ENCODE measurements at regions of chr1 and their contacts with region 1.

Region 1: GRCh38 chr1:38990738-38991639 is at the start of gene AKIRIN1:
- DNase-seq: peak; percentile 99
- ATAC-seq: peak; percentile 99
- total RNA-seq, gene AKIRIN1: 65.7 TPM

Region 2: DNA sequence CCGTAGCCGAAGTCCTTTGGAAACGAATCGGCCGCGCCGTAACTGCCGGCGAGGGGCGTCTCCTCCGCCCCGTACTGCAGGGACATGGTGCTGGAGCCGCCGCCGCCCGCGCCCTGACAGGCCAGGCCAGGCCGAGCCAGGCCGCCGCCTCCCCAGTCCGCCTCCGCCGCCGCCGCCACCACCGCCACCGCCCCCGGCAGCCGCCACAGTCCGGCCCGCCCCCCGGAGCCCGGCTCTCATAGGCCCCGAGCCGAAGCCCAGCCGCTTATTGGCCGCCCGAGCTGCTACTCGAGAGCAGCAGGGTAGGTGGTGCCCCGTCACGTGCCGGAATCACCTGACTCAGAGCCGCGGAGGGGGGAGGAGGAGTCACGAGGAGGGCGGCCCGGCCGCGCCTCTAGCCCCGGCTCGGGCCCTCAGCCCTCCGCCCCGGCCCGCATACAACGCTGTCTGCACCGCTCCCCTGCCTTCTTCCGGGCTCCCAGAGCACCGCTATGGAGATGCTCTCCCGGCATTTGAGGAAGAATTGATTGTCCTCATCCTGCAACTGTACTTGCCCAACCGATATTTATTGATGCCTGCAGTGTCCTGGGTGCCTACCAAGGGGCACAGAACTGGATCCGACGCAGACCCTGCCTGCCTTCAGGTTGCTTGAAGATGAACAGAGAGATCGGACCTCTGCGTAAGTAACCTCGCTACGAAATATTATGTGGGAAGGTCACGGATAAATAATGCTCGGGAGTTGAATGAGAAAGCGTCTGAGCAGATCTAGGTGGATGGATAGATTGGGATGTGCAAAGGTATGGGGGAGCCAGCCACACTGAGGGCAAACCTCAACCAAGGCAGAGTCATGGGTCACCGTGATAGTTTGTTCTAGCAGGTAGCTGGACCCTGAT is 131.2 kb before region 1 on chr1 and contains the start of gene RRAGC:
- intact Hi-C with region 1: loop called (anchors 5 kb)
- DNase-seq: peak; percentile 100
- ATAC-seq: peak; percentile 99
- total RNA-seq, gene RRAGC: 24.6 TPM

Region 3: DNA sequence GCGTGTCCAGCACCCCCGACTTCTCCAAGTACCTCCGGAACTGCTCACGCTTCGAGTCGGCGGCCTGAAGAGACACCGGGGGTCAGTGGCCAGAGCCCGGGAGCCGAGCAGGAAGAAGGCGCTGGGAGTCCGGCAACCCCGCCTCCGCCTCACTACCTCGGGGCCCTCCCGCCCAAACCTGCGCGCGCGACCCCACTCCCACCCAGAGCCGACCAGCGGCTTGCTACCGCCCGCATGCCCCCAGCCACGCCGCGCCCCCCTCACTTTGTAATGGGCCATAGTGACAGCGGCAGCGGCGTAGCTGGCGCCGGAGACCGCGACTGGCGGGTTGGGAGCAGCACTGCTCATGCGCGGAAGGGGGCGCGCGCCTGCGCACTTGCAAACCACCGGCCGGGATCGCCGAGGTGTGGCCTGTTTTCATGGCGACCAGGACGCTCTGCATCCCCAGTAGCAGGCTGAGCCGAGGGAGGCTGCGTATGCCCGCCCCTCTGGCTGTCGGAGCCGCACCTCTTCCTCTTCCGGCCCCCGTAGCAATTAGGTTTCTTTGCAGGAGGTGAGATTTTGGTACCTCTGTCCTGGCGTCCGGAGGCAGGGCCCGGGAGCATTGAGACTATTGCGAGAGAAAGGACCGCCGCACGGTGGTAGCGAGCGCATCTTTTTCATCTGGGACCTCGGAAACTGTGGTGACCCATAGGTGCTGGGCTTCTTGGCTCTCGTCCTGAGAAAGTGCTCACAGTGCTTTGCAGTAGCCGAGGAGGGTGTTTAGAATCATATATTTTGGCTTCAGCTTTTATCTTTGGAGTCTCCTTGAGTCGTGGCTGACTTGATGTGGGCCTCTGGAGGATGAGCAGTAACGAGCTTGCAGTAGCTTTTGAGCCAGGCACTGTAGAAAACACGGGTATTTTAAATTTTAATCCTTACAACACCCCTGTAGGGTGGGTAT is 117.7 kb before region 1 on chr1 and contains the start of gene MYCBP:
- intact Hi-C with region 1: loop called (anchors 5 kb)
- DNase-seq: peak; percentile 97
- ATAC-seq: peak; percentile 100
- total RNA-seq, gene MYCBP: 16.8 TPM

Region 4: DNA sequence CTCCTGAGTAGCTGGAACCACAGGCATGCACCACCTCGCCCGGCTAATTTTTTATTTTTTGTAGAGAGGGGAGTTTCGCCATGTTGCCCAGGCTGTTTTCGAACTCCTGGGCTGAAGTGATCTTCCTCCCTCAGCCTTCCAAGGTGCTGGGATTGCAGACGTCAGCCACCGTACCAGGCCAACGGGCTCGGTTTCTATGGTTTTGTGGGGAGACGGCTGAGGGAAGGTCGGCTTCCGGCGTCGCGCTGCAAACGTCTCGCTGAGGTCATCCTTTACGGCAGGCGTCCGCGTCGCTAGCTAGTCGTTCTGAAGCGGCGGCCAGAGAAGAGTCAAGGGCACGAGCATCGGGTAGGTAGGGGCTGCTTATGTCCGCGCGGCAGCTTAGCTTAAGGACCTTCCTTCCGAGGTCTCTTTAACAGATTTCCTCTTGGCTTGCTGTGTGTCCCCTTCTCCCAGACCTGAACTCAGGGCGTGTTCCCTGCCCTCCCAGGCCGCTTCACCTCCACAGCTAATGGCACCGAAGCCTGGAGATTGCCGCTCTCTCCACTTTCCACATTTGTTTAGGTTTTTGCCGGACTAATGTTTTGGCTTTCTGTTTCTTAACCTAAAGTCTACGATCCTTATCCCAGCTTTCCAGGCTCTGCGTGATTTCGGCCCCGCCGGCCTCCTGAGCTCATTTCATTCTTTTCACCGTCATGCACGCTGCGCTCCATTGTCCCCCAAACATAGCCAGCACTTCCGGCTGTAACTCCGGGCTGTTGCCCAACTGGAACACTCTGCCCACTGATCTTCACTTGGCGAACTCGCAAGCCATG is 35.3 kb after region 1 on chr1 and contains the start of gene NDUFS5:
- intact Hi-C with region 1: loop called (anchors 5 kb)
- DNase-seq: peak; percentile 96
- ATAC-seq: peak; percentile 95
- total RNA-seq, gene NDUFS5: 776 TPM

Measured in Right ventricle myocardium inferior (tissue), 1 donor.